ENCODE measurements at regions of chr6 and their contacts with region 1.

Region 1: DNA sequence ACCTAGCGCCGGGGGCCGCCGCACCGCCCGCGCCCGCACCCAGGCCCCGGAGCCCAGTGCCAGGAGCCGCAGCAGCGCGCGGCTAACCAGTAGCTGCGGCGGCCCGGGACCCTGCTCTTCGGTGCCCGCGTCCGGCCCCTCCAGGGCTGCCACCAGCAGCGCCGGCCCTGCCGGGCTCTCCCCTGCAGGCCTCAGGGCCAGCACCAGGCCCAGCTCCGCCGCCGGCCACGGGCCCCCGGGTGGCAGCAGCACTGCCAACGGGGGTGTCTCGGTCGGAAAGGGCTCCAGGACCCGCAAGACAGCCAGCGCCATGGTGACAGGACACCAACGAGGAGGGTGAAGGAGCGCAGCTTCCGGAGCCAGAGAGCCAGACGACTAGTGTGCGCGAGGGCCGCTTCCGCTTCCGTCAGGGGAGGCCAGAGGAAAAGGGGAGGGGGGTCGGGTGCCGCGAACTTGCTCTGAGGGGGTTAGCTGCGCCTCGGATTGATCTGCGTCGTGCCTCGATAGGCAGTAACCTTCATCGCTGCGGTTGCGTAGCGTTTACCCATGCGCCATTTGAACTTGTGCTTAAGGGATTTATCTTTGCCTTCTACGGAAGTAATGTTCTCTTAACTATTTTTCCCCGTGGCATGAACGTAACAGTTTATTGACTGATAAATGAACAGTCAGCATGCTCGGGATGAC is at the start of gene PEX6:
- DNase-seq: peak; percentile 83 to 99 (median 93)
- ATAC-seq: peak; percentile 91 to 93
- H3K4me3 Mint-ChIP-seq: peak within 1 kb of the TSS; percentile 85 to 97 (median 94)
- H3K27ac Mint-ChIP-seq: peak within 1 kb of the TSS; percentile 96 to 100 (median 98)
- H3K4me1 Mint-ChIP-seq: peaks cover 16 to 59% (median 48%) of the 10 kb centered on the region in 4 donors
- H3K27me3 Mint-ChIP-seq: no peaks in the 10 kb centered on the region
- polyA plus RNA-seq, gene PEX6: 17.6 to 30.8 (median 23.6) TPM

Region 2: DNA sequence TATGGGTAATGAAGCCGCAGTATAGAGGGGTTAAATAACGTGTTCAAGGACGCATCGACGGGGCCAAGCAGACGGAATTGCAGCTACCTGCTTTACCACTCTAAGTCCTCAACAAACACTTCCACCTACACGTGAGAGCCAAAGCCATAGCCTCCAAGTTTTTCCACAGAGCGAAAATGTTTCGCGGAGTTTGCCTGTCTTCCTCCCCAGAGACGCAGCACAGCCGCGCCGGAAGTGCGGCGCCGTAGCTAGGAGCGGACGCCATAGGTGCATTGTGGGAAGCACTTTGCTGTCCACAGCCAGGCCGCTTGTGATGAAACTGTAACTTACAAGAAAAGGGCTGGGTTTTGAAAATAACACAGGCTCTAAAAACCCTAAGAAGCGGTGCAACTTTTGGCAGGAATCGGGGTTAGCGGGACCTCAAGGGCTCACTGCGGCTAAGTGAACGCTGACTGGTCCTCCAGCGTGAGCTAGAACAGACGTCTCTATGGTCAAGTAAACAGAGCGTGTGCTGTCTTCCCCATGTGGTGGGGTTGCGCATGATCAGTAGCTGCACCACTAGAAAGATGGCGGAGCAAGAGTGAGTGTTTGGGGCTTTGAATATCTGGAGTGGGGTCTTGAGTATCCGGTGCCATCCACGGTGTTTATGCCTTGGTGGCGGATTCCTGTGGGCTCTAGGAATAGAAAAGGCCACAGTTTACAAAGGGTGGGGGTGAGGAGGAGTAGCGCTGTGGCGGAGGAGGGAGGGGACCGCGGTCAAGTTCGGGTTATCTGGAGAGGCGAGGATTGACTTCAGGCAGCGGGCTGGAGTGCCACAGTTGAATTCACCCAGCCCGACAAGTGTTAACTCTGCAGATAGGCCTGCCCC is 99.4 kb before region 1 on chr6 and contains the start of gene RPL7L1:
- POLR2A ChIA-PET with region 1: interaction called, 15 read pairs
- DNase-seq: peak; percentile 67 to 93 (median 83)
- ATAC-seq: peak; percentile 92 to 93
- H3K4me3 Mint-ChIP-seq: peak within 1 kb of the TSS; percentile 92 to 100 (median 97)
- H3K27ac Mint-ChIP-seq: peak within 1 kb of the TSS; percentile 98 to 100 (median 100)
- H3K4me1 Mint-ChIP-seq: peaks cover 9 to 37% (median 35%) of the 10 kb centered on the region in 4 donors
- H3K27me3 Mint-ChIP-seq: no peaks in the 10 kb centered on the region
- polyA plus RNA-seq, gene RPL7L1: 65.3 to 87.9 (median 67.4) TPM

Region 3: DNA sequence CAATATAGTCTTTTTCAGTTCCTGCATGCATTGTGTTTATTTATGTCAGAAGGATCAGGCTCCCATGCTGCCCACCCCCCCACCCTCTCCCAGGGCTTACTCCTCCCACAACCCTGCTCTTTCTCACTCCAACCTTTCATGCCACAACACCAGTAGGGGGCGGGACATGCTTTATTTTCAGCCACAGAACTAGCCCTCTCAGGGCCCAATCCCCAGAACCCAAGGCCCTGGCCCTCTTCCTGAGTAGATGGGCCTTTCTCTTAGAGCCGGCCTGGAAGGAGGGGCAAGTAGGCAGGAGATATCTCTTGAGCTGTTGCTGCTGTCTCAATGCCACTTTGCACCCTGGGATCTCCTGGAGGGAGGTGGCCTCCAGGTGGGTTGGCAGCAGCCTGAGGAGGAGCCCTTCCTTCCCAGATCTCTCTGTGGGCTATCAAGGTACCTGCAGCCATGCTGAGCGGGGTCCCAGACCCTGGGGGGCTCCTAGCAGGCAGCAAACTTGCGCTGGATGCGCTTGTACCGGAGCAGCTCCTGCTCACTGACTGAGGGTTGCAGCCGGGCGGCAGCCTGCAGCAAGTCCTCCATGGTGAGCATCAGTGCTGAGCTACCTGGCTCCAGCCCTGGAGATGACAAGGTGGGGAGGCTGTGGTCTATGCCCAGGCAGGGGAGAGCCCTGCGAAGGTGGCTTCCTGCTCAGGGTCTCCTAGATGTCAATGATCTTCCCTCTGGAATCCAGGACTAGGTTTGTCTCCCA is 15.0 kb before region 1 on chr6:
- POLR2A ChIA-PET with region 1: interaction called, 15 read pairs
- DNase-seq: peak in 4 of 10 donors; percentile 10 to 44 (median 29)
- ATAC-seq: no peak
- H3K4me3 Mint-ChIP-seq: peak overlapping the region in 1 of 10 donors; percentile 6
- H3K27ac Mint-ChIP-seq: peak overlapping the region in 2 of 10 donors; percentile 65 to 66
- H3K4me1 Mint-ChIP-seq: peaks cover 16 to 27% (median 21%) of the 10 kb centered on the region in 4 donors
- H3K27me3 Mint-ChIP-seq: peaks cover 0 to 2% (median 0%) of the 10 kb centered on the region in 5 donors

Region 4: GRCh38 chr6:43013843-43014433 is 35.0 kb after region 1 on chr6 and contains the starts of genes KLHDC3 and MEA1:
- POLR2A ChIA-PET with region 1: interaction called, 81 read pairs
- DNase-seq: peak; percentile 93 to 100 (median 99)
- ATAC-seq: peak; percentile 92
- H3K4me3 Mint-ChIP-seq: peak within 1 kb of the TSS; percentile 89 to 97 (median 94)
- H3K27ac Mint-ChIP-seq: peak within 1 kb of the TSS; percentile 82 to 98 (median 95)
- H3K4me1 Mint-ChIP-seq: peaks cover 52 to 82% (median 68%) of the 10 kb centered on the region in 4 donors
- H3K27me3 Mint-ChIP-seq: no peaks in the 10 kb centered on the region
- polyA plus RNA-seq, gene KLHDC3: 107 to 136 (median 117) TPM
- polyA plus RNA-seq, gene MEA1: 73.4 to 90.9 (median 77.5) TPM

Region 5: GRCh38 chr6:43021270-43022047 is 42.5 kb after region 1 on chr6 and contains the start of gene RRP36:
- POLR2A ChIA-PET with region 1: interaction called, 81 read pairs
- DNase-seq: peak; percentile 39 to 76 (median 58)
- ATAC-seq: peak; percentile 83 to 88
- H3K4me3 Mint-ChIP-seq: peak within 1 kb of the TSS; percentile 95 to 99 (median 98)
- H3K27ac Mint-ChIP-seq: peak within 1 kb of the TSS; percentile 68 to 97 (median 93)
- H3K4me1 Mint-ChIP-seq: peaks cover 34 to 50% (median 48%) of the 10 kb centered on the region in 4 donors
- H3K27me3 Mint-ChIP-seq: no peaks in the 10 kb centered on the region
- polyA plus RNA-seq, gene RRP36: 52.7 to 74.5 (median 57.8) TPM

Region 6: DNA sequence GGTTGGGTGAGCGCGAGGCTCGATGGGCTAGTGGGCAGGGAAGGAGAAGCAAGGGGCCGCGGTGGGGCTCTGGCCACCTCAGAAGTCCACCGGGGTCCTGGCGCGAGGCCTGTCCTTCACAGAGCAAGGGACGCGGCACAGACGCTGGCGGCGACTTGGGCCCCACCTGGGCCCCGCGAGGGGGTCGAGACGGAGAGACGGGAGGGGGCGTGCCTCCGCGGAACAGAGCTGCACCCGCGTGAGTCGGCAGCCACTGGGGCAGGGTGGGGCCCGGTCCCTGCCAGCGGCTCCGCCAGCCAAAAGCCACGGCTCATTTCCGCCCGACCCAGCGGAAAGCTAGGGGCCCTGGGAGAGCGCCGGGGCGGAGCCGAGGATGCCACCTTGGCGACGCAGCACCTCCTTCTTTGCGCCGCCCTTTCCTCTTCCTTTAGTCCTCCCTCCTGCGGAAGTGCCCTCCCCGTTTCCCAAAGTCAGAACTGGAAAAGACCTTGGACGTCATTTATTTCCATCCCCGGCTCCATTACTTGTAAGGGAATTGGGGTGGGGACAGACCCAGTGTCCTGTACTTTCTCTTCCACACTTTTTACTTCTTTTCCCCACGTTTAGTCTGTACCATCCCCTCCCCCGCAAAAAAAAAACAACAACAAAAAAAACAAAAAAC is 74.7 kb after region 1 on chr6 and contains the start of gene CUL7:
- POLR2A ChIA-PET with region 1: interaction called, 24 read pairs
- DNase-seq: peak; percentile 81 to 94 (median 86)
- ATAC-seq: peak; percentile 99
- H3K4me3 Mint-ChIP-seq: peak within 1 kb of the TSS; percentile 88 to 97 (median 94)
- H3K27ac Mint-ChIP-seq: peak within 1 kb of the TSS; percentile 80 to 98 (median 96)
- H3K4me1 Mint-ChIP-seq: peaks cover 34 to 54% (median 53%) of the 10 kb centered on the region in 4 donors
- H3K27me3 Mint-ChIP-seq: no peaks in the 10 kb centered on the region
- polyA plus RNA-seq, gene CUL7: 1.6 to 3.5 (median 1.6) TPM

Region 7: DNA sequence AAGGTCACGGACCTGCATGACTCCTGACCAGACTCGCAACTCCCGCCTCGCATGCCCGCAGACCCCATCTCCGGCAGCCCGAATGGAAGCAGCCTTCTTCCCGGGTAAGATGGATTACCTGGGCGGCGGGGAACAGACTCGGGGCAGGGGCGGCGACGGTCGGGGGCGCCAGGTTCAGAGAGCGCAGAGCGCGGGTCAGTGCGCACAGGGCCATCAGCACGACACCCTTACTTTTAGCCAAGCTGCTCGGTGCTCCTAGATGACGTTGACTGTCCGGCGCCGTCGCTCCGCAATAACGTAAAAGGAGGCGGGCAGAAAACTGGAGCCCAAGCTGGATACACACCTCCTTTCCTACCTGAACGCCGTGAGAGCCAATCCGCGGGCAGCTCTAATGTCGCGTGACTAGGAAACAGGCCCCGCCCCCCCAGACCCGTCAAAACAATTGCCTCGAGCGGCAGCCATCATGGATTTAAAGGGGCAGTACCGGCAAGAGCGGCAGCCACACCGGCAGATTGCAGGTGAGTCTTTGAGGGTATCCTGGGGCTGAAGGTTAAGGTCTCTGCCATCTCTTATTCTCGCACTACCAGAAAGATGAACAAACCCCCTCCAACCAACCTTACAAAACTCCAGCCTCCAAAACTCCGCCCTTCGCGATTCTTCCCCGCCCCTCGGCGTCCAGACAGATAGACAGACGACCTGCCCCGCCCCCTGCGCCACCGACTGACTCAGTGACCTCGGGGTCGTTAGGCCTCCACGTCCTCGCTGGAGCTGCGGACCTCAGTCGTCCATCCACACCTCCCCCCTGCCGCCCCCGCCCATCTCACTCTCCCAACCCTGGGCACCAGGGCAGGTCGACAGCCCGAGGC is 80.4 kb after region 1 on chr6 and contains the starts of genes KLC4 and MRPL2:
- POLR2A ChIA-PET with region 1: interaction called, 24 read pairs
- DNase-seq: peak; percentile 91 to 98 (median 96)
- ATAC-seq: peak; percentile 94 to 98
- H3K4me3 Mint-ChIP-seq: peak within 1 kb of the TSS; percentile 93 to 99 (median 95)
- H3K27ac Mint-ChIP-seq: peak within 1 kb of the TSS; percentile 96 to 100 (median 99)
- H3K4me1 Mint-ChIP-seq: peaks cover 17 to 49% (median 40%) of the 10 kb centered on the region in 4 donors
- H3K27me3 Mint-ChIP-seq: no peaks in the 10 kb centered on the region
- polyA plus RNA-seq, gene KLC4: 9.9 to 12.7 (median 10.9) TPM
- polyA plus RNA-seq, gene MRPL2: 40.7 to 69.9 (median 59.5) TPM

Measured in naive thymus-derived CD8-positive, alpha-beta T cell (primary cell).